Heart right ventricle (tissue), 16 donors: ENCODE measurements at regions of chr4 and their contacts with region 1.

Region 1: DNA sequence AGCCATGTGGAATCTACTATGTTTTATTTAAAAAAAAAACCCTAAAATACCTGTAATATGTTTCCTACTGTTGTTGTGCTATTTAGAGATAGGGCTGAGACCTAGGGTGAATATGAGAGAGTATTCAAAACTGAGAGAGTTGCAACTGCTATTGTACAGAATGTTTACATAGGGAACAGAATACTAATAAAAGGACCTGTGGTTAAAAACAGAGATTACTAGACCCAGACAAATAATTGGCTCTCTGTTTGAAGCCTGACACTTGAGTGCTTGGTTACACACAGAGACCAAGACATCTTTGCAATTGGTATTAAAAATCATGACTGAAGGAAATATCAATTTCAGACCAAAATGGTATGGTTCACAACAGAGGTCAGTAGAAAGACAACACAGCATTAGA is 278.9 kb upstream of the GIMD1 start:
- DNase-seq: no peak
- ATAC-seq: no peak
- H3K4me3 ChIP-seq: no peak overlapping the region
- H3K27ac ChIP-seq: no peak overlapping the region
- H3K4me1 ChIP-seq: no peaks in the 10 kb centered on the region
- H3K27me3 ChIP-seq: no peaks in the 10 kb centered on the region
- CTCF ChIP-seq: no peak

Region 2: GRCh38 chr4:106579236-106579635 is 68.2 kb before region 1 on chr4:
- intact Hi-C with region 1: no loop called
- DNase-seq: no peak
- ATAC-seq: no peak
- H3K4me3 ChIP-seq: no peak overlapping the region
- H3K27ac ChIP-seq: no peak overlapping the region
- H3K4me1 ChIP-seq: no peaks in the 10 kb centered on the region
- H3K27me3 ChIP-seq: no peaks in the 10 kb centered on the region
- CTCF ChIP-seq: no peak

Region 3: GRCh38 chr4:106601519-106601918 is 45.9 kb before region 1 on chr4:
- intact Hi-C with region 1: loop called in 1 of 10 experiments (anchors 1 kb)
- DNase-seq: no peak
- ATAC-seq: no peak
- H3K4me3 ChIP-seq: no peak overlapping the region
- H3K27ac ChIP-seq: no peak overlapping the region
- H3K4me1 ChIP-seq: no peaks in the 10 kb centered on the region
- H3K27me3 ChIP-seq: no peaks in the 10 kb centered on the region
- CTCF ChIP-seq: no peak

Region 4: DNA sequence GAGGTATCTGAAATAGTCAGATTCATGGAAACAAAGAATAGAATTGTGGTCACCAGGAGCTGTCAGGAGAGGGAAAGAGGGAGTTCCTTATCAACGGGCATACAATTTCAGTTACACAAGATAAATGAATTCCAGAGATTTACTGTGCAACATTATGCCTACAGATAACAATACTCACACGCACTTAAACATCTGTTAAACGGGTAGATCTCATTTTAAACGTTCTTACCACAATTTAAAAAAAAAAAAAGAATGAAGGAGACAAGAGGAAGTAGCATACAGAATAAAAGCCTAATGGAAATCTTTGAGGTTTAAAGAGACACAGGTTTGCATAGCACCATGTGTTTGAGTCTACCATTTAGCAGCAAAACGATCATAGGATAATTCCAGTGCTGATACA is 90.7 kb after region 1 on chr4:
- intact Hi-C with region 1: no loop called
- DNase-seq: no peak
- ATAC-seq: no peak
- H3K4me3 ChIP-seq: no peak overlapping the region
- H3K27ac ChIP-seq: no peak overlapping the region
- H3K4me1 ChIP-seq: no peaks in the 10 kb centered on the region
- H3K27me3 ChIP-seq: no peaks in the 10 kb centered on the region
- CTCF ChIP-seq: no peak